HCT116 (cell line): ENCODE measurements at regions of chr6 and their contacts with region 1.

Region 1: DNA sequence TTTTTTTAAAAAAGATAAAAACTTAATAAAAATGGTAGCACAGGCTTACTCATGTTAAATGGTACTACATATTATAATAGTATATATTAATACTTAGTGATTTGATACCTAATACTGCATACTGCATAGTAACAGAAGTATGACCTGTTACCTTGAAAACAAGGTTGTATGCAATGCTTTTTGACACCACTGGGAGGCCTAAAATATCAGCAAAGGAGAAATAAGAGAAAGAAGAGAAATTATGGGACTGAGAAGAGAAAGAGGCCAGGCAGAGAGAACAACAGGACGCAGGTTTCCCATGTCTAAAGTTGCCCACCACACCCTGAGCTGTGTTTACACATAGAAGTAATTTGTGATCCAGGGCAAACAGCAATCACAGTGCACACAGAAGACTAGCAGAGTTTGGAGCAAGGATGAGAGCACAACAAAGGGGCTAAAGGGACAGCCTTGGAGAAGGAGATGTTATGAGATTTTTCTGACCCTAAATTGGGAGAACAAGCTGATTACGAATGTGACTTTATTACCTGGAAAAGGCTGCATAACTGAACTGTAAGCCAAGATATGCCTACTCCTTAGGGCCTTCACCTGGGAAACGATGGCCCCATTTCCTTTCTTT is 73.2 kb downstream of the ROS1 start:
- DNase-seq: peak; percentile 24
- ATAC-seq: peak; percentile 76
- H3K4me3 ChIP-seq: no peak overlapping the region
- H3K27ac ChIP-seq: no peak overlapping the region
- H3K4me1 ChIP-seq: no peaks in the 10 kb centered on the region
- H3K27me3 ChIP-seq: no peaks in the 10 kb centered on the region
- CTCF ChIP-seq: peak; percentile 46 to 51 (median 50); a peak in 5 of 6 replicates
- POLR2A ChIP-seq: no peak
- RAD21 ChIP-seq: peak; percentile 64

Region 2: GRCh38 chr6:116941727-116942126 is 410.8 kb before region 1 on chr6:
- CTCF ChIA-PET with region 1: no interaction called
- POLR2A ChIA-PET with region 1: no interaction called
- RAD21 ChIA-PET with region 1: no interaction called
- intact Hi-C with region 1: no loop called
- DNase-seq: no peak
- ATAC-seq: peak; percentile 68
- H3K4me3 ChIP-seq: no peak overlapping the region
- H3K27ac ChIP-seq: no peak overlapping the region
- H3K4me1 ChIP-seq: no peaks in the 10 kb centered on the region
- H3K27me3 ChIP-seq: no peaks in the 10 kb centered on the region
- CTCF ChIP-seq: peak in 2 of 3 experiments; percentile 37 to 38; a peak in 3 of 6 replicates
- POLR2A ChIP-seq: no peak
- RAD21 ChIP-seq: peak; percentile 37; the same call in 1 of the 2 replicates

Region 3: DNA sequence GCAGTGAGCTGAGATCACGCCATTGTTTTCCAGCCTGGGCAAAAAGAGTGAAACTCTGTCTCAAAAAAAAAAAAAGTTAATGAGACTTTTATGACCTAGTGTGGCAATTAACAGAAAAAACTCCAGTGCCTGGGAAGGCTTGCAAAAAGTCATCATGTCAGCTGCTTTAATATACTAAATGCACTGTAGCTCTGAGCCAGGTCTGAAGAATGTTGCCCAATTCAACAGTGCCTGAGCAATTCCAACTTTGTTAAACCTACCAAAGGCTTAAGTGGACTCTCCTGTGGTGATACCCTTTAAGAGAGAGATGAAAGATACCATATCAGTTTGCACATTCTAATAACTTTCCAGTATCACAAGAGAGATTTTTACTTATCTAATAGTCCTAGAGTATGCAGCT is 79.7 kb after region 1 on chr6:
- CTCF ChIA-PET with region 1: no interaction called
- POLR2A ChIA-PET with region 1: no interaction called
- RAD21 ChIA-PET with region 1: no interaction called
- intact Hi-C with region 1: no loop called
- DNase-seq: no peak
- ATAC-seq: no peak
- H3K4me3 ChIP-seq: no peak overlapping the region
- H3K27ac ChIP-seq: no peak overlapping the region
- H3K4me1 ChIP-seq: no peaks in the 10 kb centered on the region
- H3K27me3 ChIP-seq: no peaks in the 10 kb centered on the region
- CTCF ChIP-seq: no peak
- POLR2A ChIP-seq: no peak
- RAD21 ChIP-seq: no peak

Region 4: DNA sequence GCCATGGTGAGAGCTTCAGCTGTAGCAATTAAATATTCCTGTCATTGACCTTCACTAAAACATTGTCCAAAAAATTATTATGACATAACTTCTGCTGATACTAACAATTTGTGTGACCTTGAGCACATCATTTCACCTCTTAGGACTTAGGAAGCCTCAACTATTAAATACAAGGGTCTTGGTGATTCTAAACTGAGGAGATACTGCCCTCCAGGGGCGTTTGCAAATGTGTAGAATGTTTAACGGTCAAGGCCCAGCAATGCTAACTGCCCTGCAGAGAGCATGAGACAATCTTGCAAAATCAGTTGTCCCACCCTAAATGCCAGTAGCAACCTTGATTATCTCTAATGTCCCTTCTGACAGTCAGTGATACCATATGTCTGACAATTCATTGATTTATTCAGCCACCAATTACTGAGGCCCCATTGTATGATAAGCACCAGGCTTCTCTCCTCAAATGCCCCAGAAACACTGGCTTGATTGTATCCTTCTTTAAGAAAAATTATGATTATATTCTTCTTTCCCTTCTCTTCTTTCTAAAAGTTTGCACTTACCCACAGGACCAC is 911.4 kb after region 1 on chr6:
- CTCF ChIA-PET with region 1: no interaction called
- POLR2A ChIA-PET with region 1: no interaction called
- RAD21 ChIA-PET with region 1: no interaction called
- intact Hi-C with region 1: loop called (anchors 10 kb)
- DNase-seq: peak; percentile 15
- ATAC-seq: peak; percentile 65
- H3K4me3 ChIP-seq: no peak overlapping the region
- H3K27ac ChIP-seq: no peak overlapping the region
- H3K4me1 ChIP-seq: no peaks in the 10 kb centered on the region
- H3K27me3 ChIP-seq: no peaks in the 10 kb centered on the region
- CTCF ChIP-seq: peak; percentile 16 to 50 (median 43); a peak in 3 of 6 replicates
- POLR2A ChIP-seq: no peak
- RAD21 ChIP-seq: peak; percentile 62